ENCODE measurements at regions of chr5 and their contacts with region 1.

Region 1: DNA sequence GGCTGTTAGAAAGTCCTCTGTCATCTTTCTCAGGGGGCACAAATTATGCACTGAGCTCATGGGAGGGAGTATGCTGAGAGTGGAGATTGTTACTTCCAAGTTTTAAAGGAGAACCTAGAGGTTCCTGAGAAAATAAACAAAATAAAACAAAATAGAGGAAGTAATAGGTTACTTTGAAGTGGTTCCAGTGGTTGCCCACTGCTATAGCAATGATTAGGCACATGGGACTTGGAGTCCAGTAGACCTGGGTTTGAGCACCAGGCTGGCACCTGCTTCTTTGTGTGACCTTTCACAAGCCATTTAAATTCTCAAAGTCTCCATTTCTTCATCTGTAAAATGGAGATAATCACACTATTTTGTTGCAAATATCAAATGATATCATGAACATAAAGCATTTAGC is 13.8 kb upstream of the CDC23 start:
- DNase-seq: no peak
- ATAC-seq: no peak
- H3K4me3 ChIP-seq: no peak overlapping the region
- H3K27ac ChIP-seq: no peak overlapping the region
- H3K4me1 ChIP-seq: no peaks in the 10 kb centered on the region
- H3K27me3 ChIP-seq: peaks cover 10% of the 10 kb centered on the region
- CTCF ChIP-seq: no peak
- POLR2A ChIP-seq: no peak
- RAD21 ChIP-seq: no peak

Region 2: GRCh38 chr5:138282920-138283742 is 56.2 kb after region 1 on chr5:
- CTCF ChIA-PET with region 1: interaction called, 3 read pairs
- POLR2A ChIA-PET with region 1: no interaction called
- dilution Hi-C with region 1: no loop called
- in situ Hi-C with region 1: no loop called
- intact Hi-C with region 1: loop called (anchors 1 kb)
- DNase-seq: peak; percentile 67
- ATAC-seq: peak; percentile 99
- H3K4me3 ChIP-seq: no peak overlapping the region
- H3K27ac ChIP-seq: no peak overlapping the region
- H3K4me1 ChIP-seq: no peaks in the 10 kb centered on the region
- H3K27me3 ChIP-seq: no peaks in the 10 kb centered on the region
- CTCF ChIP-seq: peak; percentile 64
- POLR2A ChIP-seq: no peak
- RAD21 ChIP-seq: peak; percentile 67

Region 3: GRCh38 chr5:138408023-138408422 is 181.1 kb after region 1 on chr5:
- CTCF ChIA-PET with region 1: interaction called, 3 read pairs
- POLR2A ChIA-PET with region 1: no interaction called
- dilution Hi-C with region 1: no loop called
- in situ Hi-C with region 1: loop called (anchors 10 kb)
- intact Hi-C with region 1: loop called (anchors 2 kb)
- DNase-seq: no peak
- ATAC-seq: no peak
- H3K4me3 ChIP-seq: no peak overlapping the region
- H3K27ac ChIP-seq: no peak overlapping the region
- H3K4me1 ChIP-seq: no peaks in the 10 kb centered on the region
- H3K27me3 ChIP-seq: no peaks in the 10 kb centered on the region
- CTCF ChIP-seq: no peak
- POLR2A ChIP-seq: no peak
- RAD21 ChIP-seq: no peak

Region 4: DNA sequence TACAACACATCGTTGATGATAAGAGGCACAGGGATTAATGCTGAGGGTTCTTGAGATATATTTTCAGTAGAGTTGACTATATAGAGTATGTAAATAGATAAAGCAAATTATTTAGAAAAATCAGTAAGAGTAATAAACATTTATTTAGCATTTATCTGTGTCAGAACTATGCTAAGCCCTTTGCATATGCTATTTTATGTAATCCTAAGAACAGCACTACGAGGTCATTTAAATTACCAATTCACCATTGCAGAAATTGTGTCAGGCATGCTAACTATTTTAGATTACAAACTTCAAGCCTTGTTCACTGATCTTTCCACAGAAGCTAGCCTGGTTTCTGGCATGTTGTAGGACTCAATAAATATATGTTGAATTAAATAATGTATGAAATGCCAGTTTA is 191.5 kb after region 1 on chr5:
- CTCF ChIA-PET with region 1: no interaction called
- POLR2A ChIA-PET with region 1: no interaction called
- dilution Hi-C with region 1: no loop called
- in situ Hi-C with region 1: loop called (anchors 10 kb)
- intact Hi-C with region 1: no loop called
- DNase-seq: no peak
- ATAC-seq: no peak
- H3K4me3 ChIP-seq: no peak overlapping the region
- H3K27ac ChIP-seq: no peak overlapping the region
- H3K4me1 ChIP-seq: no peaks in the 10 kb centered on the region
- H3K27me3 ChIP-seq: no peaks in the 10 kb centered on the region
- CTCF ChIP-seq: no peak
- POLR2A ChIP-seq: no peak
- RAD21 ChIP-seq: no peak